Adrenal gland (tissue), 19 donors: ENCODE measurements at regions of chr7 and their contacts with region 1.

Region 1: DNA sequence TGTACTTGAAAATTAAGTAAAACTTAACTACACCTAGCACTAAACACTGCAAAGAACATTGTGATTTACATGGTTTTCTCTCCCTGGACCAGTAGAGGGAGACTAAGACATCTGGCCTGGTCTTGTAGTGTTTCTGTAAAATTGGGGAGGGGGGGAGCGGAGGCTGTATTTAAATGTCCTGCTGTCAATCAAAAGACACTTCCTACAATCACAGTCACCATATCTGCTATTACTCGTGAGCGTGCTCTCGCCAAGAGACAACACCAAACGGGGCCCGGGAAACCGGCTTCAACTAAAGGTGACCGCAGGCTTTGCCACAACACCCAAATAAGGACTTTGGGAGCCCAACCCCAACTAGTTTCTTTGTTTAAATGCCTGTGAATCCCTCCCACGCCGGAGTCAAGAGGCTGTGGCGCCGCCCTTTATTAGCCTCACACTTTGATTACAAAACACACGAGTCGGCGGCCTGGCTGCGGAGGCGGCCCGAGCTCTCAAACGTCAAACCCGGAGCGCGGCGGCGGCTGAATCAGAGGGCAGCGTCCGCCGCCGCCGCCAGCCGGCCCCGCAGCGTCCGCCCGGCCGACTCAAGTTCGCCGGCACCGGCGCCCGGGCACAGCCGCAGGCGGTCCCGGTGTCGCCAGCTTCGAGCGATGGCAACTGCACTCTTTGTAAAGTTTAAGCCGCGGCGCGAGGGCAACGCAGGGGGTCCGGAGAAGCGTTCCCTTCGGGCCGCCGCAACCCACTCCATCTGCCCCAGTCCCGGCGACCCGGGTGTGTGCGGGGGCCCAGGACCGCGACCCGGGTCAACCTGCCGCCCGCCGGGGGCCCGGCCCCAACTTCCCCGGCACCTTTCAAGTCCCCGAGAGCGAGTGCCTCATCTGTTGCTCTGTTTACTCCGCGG is 1.3 kb downstream of the KDM7A start:
- DNase-seq: peak; percentile 80 to 95 (median 89)
- H3K4me3 ChIP-seq: peak overlapping the region; percentile 48 to 94 (median 67)
- H3K27ac ChIP-seq: peak overlapping the region; percentile 72 to 98 (median 97)
- H3K4me1 ChIP-seq: peaks cover 4 to 15% of the 10 kb centered on the region in 2 donors
- H3K27me3 ChIP-seq: no peaks in the 10 kb centered on the region
- CTCF ChIP-seq: peak; percentile 65 to 93 (median 78)
- POLR2A ChIP-seq: peak; percentile 94

Region 2: DNA sequence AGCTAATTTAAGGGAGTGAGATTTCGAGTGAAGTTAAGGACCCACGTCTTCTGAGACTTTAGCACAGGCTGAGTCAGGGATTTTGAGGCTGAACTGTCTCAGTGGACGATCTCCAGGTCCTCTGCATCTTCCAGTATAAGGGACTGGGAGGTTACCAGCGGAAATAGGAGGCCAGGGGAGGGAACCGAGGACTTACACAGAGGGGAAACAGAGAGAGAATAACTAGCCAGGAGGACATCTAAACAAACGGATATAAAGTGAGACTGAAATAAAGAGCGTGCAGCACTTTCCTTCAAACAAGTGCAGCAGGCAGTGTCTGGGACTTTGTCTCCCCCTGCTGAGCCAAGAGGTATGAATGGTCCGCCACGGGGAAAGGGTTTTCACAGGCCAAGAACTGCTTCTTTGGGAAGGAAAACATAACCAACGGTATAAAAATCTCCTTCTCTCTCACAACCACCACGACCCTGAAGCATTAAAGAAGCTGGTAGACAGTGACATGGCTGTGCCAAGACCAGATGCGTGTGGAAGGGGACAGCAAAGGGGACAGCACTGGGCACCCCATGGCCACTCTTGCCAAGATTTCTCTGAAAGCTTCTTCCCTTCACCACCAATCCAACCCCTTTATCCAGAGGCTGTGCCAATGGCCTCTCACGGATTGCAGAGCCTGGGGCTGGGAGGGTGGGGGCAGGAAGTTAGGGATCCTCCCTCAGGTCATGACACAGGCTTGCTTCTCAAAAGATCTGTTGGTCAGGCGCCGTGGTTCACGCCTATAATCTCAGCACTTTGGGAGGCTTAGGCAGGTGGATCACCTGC is 150.9 kb after region 1 on chr7:
- intact Hi-C with region 1: loop called in 1 of 2 experiments (anchors 5 kb)
- DNase-seq: peak; percentile 59 to 86 (median 71)
- H3K4me3 ChIP-seq: no peak overlapping the region
- H3K27ac ChIP-seq: no peak overlapping the region
- H3K4me1 ChIP-seq: peaks cover 0 to 11% of the 10 kb centered on the region in 2 donors
- H3K27me3 ChIP-seq: no peaks in the 10 kb centered on the region
- CTCF ChIP-seq: peak; percentile 53 to 73 (median 66)
- POLR2A ChIP-seq: no peak

Region 3: DNA sequence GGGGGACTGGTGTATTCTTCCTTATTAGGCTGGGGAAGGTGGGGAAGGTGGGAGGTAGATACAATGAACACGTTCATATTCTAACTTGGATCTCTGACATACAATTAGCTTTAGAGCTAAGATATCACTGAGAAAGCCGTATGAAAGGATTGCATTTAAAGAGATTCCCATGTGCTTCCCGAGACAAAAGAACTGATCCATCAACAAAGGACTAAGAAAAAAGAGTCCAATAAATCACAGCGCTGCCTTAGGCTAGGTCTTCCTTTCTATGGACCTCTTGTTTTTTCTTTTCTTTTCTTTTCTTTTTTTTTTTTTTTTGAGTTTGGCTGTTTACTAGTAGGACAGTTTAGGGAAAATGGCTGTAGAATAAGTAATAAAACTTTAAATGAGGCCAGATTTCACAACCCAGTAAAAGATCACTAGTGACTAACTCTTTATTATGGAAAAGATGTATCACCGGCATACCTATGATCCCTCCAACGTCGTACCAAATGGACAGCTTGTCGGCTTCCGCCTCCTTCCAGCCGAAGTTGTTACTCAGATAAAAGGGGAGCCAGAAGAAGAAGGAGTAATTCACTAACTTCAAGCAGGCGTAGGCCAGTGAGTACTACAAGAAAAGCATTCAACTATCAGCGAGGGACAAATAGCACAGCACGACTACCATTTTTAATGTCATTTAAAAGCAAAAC is 172.8 kb after region 1 on chr7:
- intact Hi-C with region 1: no loop called
- DNase-seq: no peak
- H3K4me3 ChIP-seq: no peak overlapping the region
- H3K27ac ChIP-seq: no peak overlapping the region
- H3K4me1 ChIP-seq: no peaks in the 10 kb centered on the region
- H3K27me3 ChIP-seq: no peaks in the 10 kb centered on the region
- CTCF ChIP-seq: no peak
- POLR2A ChIP-seq: no peak

Region 4: DNA sequence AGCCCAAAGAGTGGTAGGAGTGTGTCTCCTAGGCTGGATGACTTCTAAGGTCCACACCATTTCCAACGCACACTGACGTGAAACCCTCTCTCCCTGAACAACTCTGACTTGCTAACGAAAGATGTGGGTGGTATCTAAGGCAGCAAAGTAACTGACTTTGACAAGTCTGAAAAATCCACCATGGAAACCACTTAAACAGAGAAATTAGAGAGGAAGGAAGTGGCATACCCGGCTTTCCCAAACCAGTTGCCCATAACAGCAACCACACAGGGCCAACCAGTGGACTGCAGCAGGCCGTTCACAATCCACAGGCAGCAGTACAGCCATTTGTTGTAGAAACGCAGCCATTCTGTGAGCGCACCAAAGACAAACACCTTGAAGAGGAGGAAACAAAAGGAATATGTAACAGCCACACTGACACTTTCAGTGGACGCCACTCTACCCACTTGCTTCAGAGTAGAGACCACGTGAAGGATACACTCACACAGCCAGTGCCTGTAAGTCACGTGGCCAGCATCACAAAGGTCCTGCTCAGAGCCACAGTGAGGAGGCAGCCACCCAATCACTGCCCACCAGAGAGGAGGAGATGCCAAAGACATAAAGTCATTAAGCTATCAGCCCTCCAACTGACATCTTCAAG is 183.1 kb after region 1 on chr7:
- intact Hi-C with region 1: no loop called
- DNase-seq: peak in 5 of 7 donors; percentile 16 to 44 (median 37)
- H3K4me3 ChIP-seq: no peak overlapping the region
- H3K27ac ChIP-seq: peak overlapping the region in 1 of 5 donors; percentile 45
- H3K4me1 ChIP-seq: no peaks in the 10 kb centered on the region
- H3K27me3 ChIP-seq: no peaks in the 10 kb centered on the region
- CTCF ChIP-seq: no peak
- POLR2A ChIP-seq: no peak

Region 5: DNA sequence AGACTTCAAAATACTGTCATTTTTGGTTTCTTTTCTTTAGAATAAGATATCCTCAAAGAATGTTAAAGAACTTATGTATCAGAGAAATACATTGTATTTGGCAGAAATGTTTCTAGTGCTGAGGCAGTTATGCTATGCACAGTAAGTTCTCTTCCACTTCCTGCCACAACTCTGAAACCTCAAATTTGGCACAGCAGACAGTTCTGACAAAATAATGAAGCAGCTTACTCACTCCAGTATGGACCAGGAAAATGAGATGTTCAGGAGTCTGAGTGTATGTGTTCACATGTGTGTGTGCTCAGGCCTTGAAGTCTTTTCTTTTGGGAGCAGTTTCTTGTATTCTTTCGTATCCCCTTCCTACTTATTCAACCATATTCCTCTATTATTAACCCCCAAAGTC is 1178.8 kb after region 1 on chr7:
- intact Hi-C with region 1: no loop called
- DNase-seq: no peak
- H3K4me3 ChIP-seq: no peak overlapping the region
- H3K27ac ChIP-seq: no peak overlapping the region
- H3K4me1 ChIP-seq: peaks cover 0 to 7% of the 10 kb centered on the region in 2 donors
- H3K27me3 ChIP-seq: no peaks in the 10 kb centered on the region
- CTCF ChIP-seq: no peak
- POLR2A ChIP-seq: no peak